BJ (cell line): ENCODE measurements at regions of chr19 and their contacts with region 1.

Region 1: DNA sequence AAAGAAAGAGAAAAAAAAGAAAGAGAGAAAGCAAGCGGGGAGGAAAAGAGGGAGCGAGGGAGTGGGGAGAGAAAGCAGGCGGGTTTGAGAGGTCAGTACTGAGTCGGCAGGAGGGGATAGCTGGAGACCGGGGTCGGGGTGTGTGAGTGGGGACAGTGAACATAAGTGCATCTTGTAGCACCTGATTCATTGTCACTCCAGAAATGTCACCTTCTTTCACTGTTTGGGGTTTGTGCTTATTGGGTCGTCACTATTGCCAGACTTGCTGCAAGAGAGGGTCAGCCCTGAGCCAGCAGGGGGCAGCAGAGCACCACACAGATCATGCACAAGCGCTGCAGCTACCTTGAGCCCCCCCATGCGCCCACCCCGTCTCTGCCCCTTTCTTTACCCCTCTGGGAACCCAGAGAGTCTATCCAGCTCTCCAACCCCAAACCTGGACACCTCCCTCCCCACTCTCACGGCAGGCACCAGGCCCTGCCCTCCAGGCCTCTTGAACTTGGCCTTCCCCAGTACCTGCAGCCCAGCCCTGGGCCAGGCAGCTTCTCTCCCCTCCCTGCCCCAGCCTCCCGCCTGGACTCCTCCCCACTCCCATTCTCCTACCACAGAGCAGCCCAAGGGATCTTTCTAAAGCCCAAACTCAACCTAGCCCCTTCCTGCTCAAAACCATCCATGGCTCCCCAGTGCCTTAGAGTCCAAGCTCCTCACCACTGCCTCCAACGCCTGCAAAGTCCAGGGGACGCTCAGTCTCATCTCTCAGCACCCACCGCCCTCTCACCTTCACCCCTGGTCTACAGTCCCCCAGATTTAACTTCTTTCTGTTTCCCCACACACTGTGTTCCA is 9.7 kb upstream of the CEACAM16 start:
- DNase-seq: no peak
- H3K4me3 ChIP-seq: no peak overlapping the region
- H3K27me3 ChIP-seq: no peaks in the 10 kb centered on the region
- CTCF ChIP-seq: peak; percentile 97

Region 2: DNA sequence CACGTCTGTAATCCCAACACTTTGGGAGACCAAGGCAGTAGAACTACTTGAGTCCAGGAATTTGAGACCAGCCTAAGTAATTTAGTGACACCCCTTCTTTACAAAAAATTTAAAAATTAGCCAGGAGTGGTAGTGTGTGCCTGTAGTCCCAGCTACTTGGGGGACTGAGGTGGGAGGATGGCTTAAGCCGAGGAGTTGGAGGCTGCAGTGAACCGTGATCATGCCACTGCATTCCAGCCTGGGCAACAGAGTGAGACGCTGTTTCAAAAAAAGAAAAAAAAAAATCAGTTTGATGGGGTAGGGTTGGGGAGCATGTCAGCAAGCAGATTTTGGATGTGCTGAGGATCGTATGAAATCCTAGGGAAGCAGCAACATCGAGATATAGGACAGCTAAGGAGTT is 13.8 kb before region 1 on chr19:
- CTCF ChIA-PET with region 1: interaction called, 13 read pairs
- POLR2A ChIA-PET with region 1: no interaction called
- DNase-seq: no peak
- H3K4me3 ChIP-seq: no peak overlapping the region
- H3K27me3 ChIP-seq: no peaks in the 10 kb centered on the region
- CTCF ChIP-seq: no peak

Region 3: DNA sequence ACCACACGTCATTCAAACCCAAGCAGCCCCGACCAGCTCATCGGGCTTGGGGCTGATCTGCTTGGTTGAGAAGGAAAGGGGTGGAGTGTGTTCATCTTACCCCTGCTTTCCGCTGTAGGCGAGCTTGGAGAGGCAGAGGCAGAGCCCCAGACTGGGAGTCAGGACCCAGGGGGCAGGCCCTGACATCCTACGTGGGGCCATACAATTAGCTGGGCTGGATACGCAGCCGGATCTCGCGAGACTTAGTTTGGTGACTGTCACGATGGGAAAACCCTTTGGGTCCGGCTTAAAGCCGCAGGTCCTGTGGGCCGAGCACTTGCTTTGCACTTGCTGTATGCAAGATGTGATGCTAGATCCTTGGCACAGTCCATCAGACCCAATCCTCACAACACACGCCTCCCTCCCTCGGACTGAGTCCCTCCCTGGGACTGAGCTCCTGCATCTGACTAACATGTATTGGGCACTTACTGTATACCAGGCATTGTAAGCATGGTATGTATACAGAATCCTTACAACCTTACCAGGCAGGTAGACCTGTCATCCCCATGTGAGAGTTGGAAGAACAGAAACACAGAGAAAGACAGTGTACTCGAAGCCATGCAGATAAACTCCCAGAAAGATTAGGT is 13.4 kb after region 1 on chr19:
- CTCF ChIA-PET with region 1: interaction called, 13 read pairs
- POLR2A ChIA-PET with region 1: no interaction called
- DNase-seq: no peak
- H3K4me3 ChIP-seq: no peak overlapping the region
- H3K27me3 ChIP-seq: peaks cover 2% of the 10 kb centered on the region; the same call in 1 of the 2 replicates
- CTCF ChIP-seq: no peak

Region 4: GRCh38 chr19:44764975-44765948 is 76.0 kb after region 1 on chr19:
- CTCF ChIA-PET with region 1: interaction called, 63 read pairs
- POLR2A ChIA-PET with region 1: no interaction called
- DNase-seq: no peak
- H3K4me3 ChIP-seq: no peak overlapping the region
- H3K27me3 ChIP-seq: no peaks in the 10 kb centered on the region
- CTCF ChIP-seq: no peak

Region 5: DNA sequence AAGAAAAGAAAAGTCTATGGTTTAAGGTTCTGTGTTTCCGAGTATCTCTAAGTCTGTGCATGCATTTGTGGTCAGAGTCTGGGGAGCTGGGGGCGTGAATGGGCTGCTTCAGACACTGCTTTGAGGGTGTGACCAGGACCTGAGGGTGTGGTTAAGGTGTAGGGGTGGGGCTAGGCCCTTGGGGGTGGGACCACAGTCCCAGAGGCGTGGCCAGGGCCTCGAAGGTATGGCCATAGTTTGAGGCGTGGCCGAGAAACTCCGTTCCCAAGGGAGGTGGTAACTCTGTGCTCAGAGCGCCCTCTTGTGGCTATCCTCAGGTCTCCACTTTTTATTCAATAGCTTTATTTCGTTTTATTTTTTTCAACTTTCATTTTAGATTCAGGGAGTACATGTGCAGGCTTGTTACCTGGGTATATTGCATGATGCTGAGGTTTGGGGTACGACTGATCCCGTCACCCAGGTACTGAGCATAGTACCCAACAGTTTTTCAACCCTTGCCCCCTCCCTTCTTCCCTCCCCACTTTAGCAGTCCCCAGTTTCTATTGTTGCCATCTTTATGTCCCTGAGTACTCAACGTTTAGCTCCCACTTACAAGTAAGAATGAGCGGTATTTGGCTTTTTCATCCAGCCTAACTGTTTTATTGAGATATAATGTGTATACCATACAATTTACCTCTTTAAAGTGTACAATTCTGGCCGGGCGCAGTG is 81.4 kb after region 1 on chr19:
- CTCF ChIA-PET with region 1: interaction called, 63 read pairs
- POLR2A ChIA-PET with region 1: no interaction called
- DNase-seq: peak; percentile 44
- H3K4me3 ChIP-seq: no peak overlapping the region
- H3K27me3 ChIP-seq: no peaks in the 10 kb centered on the region
- CTCF ChIP-seq: peak; percentile 72

Region 6: GRCh38 chr19:44808463-44809371 is 119.4 kb after region 1 on chr19 and contains the start of gene BCAM:
- CTCF ChIA-PET with region 1: interaction called, 15 read pairs
- POLR2A ChIA-PET with region 1: no interaction called
- DNase-seq: no peak
- H3K4me3 ChIP-seq: peak within 1 kb of the TSS; percentile 66
- H3K27me3 ChIP-seq: peaks cover 3% of the 10 kb centered on the region; the same call in 1 of the 2 replicates
- CTCF ChIP-seq: no peak
- polyA plus RNA-seq, gene BCAM: 4.7 and 8.9 TPM in 2 replicates

Region 7: DNA sequence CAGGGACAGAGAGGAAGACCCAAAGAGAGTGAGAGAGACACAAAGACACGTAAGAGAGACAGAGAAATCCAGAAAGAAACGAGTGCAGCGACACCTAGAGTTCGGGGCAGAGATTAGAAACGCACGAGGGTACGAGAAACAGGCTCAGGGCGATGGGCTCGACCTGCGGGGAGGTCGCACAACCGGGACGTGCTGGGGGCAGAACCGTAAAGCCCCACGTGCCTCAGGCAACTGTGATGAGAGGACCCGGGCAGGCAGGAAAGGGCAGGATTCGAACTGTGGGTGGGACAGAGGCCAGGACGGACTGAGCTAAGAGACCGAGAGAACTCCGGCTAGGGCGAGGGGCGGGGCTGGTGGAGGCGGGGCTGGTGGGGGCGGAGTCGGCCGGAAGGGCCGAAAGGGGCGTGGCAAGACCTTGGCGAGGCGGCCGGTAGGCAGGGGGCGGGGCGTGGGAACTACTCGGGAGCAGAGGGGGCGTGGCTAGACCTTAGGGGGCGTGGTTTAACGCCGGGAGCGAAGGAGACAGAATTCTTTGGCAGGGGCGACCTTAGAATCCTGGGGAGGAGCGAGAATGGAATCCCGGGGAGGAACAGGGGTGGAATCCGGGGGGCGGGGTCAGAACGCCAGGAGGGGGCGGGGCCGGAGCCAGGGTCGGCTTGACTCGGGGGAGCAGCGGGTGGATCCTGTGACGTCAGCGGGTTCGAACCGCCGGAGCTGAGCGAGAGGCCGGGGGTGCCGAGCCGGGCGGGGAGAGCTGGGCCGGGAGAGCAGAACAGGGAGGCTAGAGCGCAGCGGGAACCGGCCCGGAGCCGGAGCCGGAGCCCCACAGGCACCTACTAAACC is 156.6 kb after region 1 on chr19 and contains the start of gene NECTIN2:
- CTCF ChIA-PET with region 1: interaction called, 14 read pairs
- POLR2A ChIA-PET with region 1: no interaction called
- DNase-seq: peak; percentile 81
- H3K4me3 ChIP-seq: peak within 1 kb of the TSS; percentile 69
- H3K27me3 ChIP-seq: no peaks in the 10 kb centered on the region
- CTCF ChIP-seq: peak; percentile 84
- polyA plus RNA-seq, gene NECTIN2: 80.6 and 107 TPM in 2 replicates